HepG2 (cell line): ENCODE measurements at regions of chr14 and their contacts with region 1.

Region 1: DNA sequence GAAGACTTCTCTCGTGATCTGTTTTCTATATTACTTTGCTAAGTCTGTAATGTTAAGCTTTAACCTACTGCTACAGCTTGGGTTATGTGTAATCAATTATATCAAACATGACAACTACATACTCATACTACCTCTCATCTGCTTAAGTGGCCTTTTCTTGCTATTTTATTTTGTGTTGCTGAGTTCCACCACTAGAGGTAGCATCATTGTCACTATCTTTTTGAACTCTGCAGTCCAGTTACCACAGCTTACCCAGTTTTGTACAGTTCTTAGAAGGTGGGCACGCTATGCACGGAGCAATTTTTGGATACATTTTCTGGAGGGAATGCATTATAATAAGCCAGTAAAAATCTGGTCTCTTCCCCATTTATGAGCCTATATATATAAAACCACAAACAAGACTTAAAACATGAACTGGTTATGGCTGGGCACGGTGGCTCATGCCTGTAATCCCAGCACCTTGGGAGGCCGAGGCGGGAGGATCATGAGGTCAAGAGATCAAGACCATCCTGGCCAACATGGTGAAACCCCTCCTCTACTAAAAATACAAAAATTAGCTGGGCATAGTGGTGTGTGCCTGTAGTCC is 48.5 kb downstream of the SAV1 start:
- DNase-seq: peak; percentile 38
- ATAC-seq: peak; percentile 94
- H3K4me3 ChIP-seq: no peak overlapping the region
- H3K27ac ChIP-seq: no peak overlapping the region
- H3K4me1 ChIP-seq: peaks cover 10% of the 10 kb centered on the region
- H3K27me3 ChIP-seq: no peaks in the 10 kb centered on the region; a peak in 1 of 5 replicates
- CTCF ChIP-seq: peak; percentile 71
- EP300 ChIP-seq: no peak
- POLR2A ChIP-seq: no peak
- RAD21 ChIP-seq: no peak

Region 2: DNA sequence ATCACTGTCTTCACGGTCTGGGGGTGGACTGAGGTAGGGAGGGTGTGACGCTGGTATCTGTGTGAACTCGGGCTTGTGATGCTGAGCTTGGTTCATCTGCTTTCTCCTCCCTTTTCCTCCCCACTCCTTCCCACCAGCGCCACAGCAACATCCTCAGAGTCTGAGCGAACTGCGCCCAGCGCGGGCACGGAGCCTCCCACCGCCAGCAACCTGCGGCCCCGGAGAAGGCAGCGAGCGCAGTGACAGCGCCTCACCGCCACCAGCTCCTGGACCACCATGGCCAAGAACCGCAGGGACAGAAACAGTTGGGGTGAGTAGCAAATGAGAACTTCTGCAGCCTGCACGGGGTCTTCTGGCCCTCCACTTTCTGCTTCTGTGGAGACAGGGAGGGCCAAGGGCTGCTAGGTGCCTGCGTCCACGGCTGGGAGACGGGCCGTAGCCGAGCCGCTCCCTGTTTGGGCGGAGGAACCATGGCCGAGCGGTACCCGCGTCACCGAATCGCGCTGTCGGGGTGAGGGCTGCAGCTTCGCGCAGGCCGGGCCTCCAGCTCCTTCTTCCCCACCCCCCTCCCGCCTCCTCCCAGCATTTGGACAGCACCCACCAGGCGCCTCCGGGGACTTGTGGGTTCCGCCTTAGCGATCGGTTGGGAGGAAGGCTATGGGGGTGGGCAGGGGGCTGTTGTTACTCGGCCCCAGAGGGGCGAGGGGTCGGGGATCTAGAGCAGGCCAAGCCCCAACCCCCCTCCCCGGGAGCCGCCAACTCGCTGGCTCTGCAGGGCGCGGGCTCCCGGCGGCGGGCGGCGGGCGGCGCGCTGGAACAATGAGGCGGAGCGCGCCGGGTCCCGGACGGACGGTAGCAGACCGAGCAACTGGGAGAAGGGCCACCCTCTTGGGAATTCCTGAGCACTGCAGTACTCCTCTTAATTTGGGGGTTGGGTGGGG is 59.4 kb before region 1 on chr14 and contains the start of gene ATL1:
- CTCF ChIA-PET with region 1: no interaction called
- POLR2A ChIA-PET with region 1: no interaction called
- in situ Hi-C with region 1: no loop called
- intact Hi-C with region 1: no loop called
- DNase-seq: no peak
- ATAC-seq: peak; percentile 92
- H3K4me3 ChIP-seq: peak within 1 kb of the TSS; percentile 57 to 74 (median 68)
- H3K27ac ChIP-seq: no peak within 1 kb of the TSS
- H3K4me1 ChIP-seq: peaks cover 9% of the 10 kb centered on the region
- H3K27me3 ChIP-seq: peaks cover 1 to 27% of the 10 kb centered on the region in 2 experiments
- CTCF ChIP-seq: no peak
- EP300 ChIP-seq: no peak
- POLR2A ChIP-seq: no peak
- RAD21 ChIP-seq: no peak
- total RNA-seq, gene ATL1: 0.45 and 0.60 TPM in 2 replicates

Region 3: GRCh38 chr14:50688875-50689274 is 69.2 kb after region 1 on chr14:
- CTCF ChIA-PET with region 1: no interaction called
- POLR2A ChIA-PET with region 1: no interaction called
- in situ Hi-C with region 1: no loop called
- intact Hi-C with region 1: loop called (anchors 2 kb)
- DNase-seq: peak; percentile 5
- ATAC-seq: peak; percentile 85
- H3K4me3 ChIP-seq: no peak overlapping the region
- H3K27ac ChIP-seq: no peak overlapping the region
- H3K4me1 ChIP-seq: no peaks in the 10 kb centered on the region
- H3K27me3 ChIP-seq: no peaks in the 10 kb centered on the region; a peak in 1 of 5 replicates
- CTCF ChIP-seq: peak; percentile 68
- EP300 ChIP-seq: no peak
- POLR2A ChIP-seq: no peak
- RAD21 ChIP-seq: 0 out of 2 replicates have a peak, but pooled peaks have one; percentile 23

Region 4: DNA sequence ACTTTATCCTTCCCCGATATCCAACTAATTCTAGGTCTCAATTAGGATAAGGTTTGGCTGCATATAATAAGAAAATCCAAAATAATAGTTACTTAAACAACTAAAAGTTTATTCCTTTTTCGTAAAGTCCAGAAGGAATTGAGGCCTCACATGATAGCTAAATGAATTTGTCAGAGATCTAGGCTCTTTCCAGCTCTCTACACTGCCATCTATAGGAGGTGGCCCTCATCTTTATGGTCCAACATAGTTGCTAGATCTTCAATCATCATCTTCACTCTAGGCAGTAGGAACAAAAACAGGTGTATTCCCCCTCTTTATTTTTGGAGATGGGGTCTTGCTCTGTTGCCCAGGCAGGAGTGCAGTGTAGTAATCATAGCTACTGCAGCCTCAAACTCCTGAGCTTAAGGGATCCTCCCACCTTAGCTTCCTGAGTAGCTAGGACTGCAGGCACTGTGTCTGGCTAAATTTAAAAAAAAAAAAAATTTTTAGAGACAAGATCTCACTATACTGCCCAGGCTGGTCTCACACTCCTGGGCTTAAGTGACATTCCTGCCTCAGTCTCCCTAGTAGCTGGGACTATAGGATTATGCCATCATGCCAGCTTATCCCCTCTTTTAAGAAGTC is 94.9 kb after region 1 on chr14:
- CTCF ChIA-PET with region 1: no interaction called
- POLR2A ChIA-PET with region 1: no interaction called
- in situ Hi-C with region 1: no loop called
- intact Hi-C with region 1: loop called (anchors 2 kb)
- DNase-seq: peak; percentile 12
- ATAC-seq: peak; percentile 67
- H3K4me3 ChIP-seq: no peak overlapping the region
- H3K27ac ChIP-seq: no peak overlapping the region
- H3K4me1 ChIP-seq: no peaks in the 10 kb centered on the region
- H3K27me3 ChIP-seq: no peaks in the 10 kb centered on the region
- CTCF ChIP-seq: peak; percentile 53
- EP300 ChIP-seq: no peak
- POLR2A ChIP-seq: no peak
- RAD21 ChIP-seq: no peak

Region 5: DNA sequence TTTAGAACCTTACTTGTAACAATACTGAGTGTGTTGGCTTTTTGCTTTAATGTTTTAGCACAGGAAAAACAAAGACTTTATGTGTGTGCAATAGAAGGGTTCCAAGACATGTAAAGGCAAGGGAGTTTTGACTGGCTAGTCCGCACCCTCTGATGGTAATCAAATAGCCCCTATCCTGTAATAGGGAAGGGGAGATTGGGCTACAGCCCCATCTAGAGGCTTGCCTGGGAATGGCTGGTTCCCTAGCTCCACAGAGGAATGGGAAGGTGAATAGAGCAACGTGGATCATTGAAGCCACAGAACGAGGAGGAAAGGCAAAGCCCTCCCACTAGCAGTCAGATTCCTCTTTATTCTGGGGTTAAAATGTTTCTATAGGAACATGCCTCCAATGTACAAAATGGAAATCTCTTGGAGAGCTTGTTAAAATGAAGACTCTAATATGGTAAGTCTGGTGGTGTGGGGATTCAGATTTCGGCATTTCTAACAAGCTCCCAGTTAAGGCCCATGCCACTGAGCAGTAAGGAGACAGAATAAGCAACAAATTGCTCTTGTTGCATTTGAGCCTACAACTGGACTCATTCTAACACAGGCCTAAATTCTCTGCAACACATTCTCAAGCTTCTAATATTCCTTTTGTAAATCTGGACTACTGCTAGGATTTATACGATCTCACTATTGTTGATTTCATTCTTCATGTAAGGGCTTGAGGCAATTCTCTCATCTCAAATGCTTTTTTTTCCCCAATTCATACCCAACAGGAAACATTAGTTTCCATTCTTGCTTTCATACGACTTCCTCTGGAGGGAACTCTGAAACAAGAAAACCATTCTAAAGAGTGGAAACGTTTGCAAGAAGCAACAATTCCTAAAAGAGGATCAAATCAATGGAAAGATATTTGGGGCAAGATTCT is 154.2 kb after region 1 on chr14:
- CTCF ChIA-PET with region 1: interaction called, 9 read pairs
- POLR2A ChIA-PET with region 1: no interaction called
- in situ Hi-C with region 1: loop called (anchors 10 kb)
- intact Hi-C with region 1: loop called (anchors 2 kb)
- DNase-seq: peak; percentile 11
- ATAC-seq: peak; percentile 88
- H3K4me3 ChIP-seq: no peak overlapping the region
- H3K27ac ChIP-seq: no peak overlapping the region
- H3K4me1 ChIP-seq: no peaks in the 10 kb centered on the region
- H3K27me3 ChIP-seq: no peaks in the 10 kb centered on the region
- CTCF ChIP-seq: peak; percentile 83
- EP300 ChIP-seq: no peak
- POLR2A ChIP-seq: no peak
- RAD21 ChIP-seq: peak; percentile 64; the same call in 1 of the 2 replicates

Region 6: DNA sequence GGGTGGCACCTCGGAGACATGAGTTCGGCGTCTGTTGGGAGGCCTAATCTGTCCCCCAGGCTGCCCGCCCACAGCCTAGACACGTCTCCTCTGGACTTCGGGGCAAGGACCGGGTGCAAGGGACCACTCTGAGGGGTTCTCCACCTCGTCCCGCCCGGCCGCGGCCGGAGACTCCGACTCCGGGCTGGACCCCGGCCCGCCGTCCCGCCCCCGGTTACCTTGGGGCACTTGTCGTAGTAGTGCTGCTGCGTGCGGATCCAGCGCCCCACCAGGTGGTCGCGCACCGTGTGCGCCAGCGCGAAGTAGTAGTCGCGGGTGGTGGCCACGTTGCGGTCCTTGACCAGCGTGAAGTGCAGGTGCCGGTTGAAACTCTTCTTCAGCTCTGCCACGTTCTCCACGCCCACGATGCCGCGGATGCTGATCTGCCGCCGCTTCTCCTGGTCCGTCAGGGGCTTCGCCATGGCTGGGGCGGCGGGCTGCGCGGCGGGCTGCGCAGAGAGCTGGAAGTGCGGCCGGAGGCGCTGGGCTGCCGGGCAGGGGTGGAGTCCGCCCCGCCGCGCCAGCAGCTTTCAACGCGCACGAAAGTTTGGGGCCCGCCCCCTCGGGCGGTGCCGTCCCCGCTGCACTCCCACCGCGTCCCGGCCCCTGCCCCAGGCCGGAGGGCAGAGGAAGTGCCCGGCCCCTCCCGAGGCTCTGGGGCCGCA is 324.4 kb after region 1 on chr14 and contains the start of gene PYGL:
- CTCF ChIA-PET with region 1: no interaction called
- POLR2A ChIA-PET with region 1: no interaction called
- in situ Hi-C with region 1: no loop called
- intact Hi-C with region 1: loop called (anchors 10 kb)
- DNase-seq: peak; percentile 55
- ATAC-seq: peak; percentile 88
- H3K4me3 ChIP-seq: peak within 1 kb of the TSS; percentile 84 to 92 (median 91)
- H3K27ac ChIP-seq: peak within 1 kb of the TSS; percentile 99
- H3K4me1 ChIP-seq: peaks cover 47% of the 10 kb centered on the region
- H3K27me3 ChIP-seq: no peaks in the 10 kb centered on the region
- CTCF ChIP-seq: peak; percentile 61
- EP300 ChIP-seq: no peak; a peak in 1 of 4 replicates
- POLR2A ChIP-seq: peak; percentile 65 to 89
- RAD21 ChIP-seq: peak; percentile 23
- total RNA-seq, gene PYGL: 110 and 138 TPM in 2 replicates